ENCODE measurements at regions of chr1 and their contacts with region 1.

Region 1: GRCh38 chr1:13465515-13465914 is 48.3 kb downstream of the LRRC38 start:
- DNase-seq: no peak

Region 2: GRCh38 chr1:12285496-12286143 is 1179.9 kb before region 1 on chr1:
- intact Hi-C with region 1: no loop called
- DNase-seq: no peak

Region 3: DNA sequence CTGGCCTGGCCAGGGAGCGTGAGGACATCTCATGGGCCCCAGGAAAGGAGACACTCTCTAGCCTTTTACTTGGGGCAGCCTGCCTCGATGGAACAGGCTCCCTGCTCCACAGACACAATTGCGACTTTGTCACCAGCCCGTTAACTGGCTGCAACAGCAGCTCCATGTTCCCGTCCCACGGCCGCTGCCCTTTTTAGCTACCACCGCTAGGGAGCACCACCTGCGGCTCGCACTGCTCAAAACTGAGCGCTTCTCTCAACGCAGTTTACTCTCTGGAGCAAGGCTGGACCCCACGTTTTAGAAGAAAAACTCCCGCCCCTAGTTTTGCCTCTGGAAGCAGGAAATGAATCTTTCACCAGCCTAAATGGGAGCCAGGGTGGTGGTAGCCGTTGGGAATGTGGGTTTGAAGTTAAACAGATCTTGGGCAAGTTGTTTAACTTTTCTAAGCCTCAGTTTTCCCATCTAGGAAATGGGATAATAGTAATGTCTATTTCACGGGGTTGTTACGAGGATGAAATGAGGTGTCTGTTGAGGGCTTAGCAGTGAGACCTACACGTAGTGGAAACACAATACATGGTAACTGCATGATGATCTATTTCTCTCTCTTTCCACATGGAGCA is 51.8 kb after region 1 on chr1:
- intact Hi-C with region 1: loop called in 1 of 2 experiments (anchors 2 kb)
- DNase-seq: no peak

Measured in posterior vena cava (tissue), 2 donors.